ENCODE measurements at regions of chrX and their contacts with region 1.

Region 1: DNA sequence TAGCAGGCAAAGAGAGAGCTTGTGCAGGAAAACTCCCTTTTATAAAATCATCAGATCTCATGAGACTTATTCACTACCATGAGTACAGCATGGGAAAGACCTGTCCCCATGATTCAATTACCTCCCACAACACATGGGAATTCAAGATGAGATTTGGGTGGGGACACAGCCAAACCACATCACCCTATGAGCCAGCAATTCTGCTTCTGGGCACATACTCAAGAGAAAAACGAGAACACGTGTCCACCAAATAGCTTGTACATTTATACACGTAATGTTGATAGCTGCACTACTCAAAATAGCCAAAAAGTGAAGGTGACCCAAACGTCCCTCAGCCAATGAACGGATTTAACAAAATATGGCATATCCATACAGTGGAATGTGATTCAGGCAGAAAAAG is 94.5 kb upstream of the DHRSX start:
- DNase-seq: no peak
- H3K4me3 Mint-ChIP-seq: no peak overlapping the region
- H3K27ac Mint-ChIP-seq: no peak overlapping the region
- H3K4me1 Mint-ChIP-seq: peaks cover 18% of the 10 kb centered on the region
- H3K27me3 Mint-ChIP-seq: no peaks in the 10 kb centered on the region

Region 2: DNA sequence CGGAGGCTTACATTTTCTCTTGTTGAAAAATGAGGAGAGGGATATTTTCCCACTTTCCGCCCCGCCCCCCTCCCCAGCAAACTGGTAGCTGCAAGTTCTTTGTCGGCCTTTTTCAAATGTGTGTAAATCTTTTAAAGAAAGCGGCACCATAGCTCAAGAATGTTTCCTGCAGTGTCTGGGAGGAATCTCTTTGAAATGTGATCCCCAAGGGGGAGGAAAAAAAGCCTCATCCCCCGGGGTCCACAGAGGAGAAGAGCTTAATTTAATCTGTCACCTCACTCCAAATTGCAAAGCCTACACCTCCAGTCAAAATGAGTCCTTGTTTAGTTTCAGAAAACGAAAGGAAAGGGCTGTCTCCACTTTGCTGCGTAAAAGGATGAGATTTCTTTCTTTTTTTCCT is 945.6 kb before region 1 on chrX:
- intact Hi-C with region 1: loop called (anchors 1 kb)
- DNase-seq: no peak
- H3K4me3 Mint-ChIP-seq: no peak overlapping the region
- H3K27ac Mint-ChIP-seq: no peak overlapping the region
- H3K4me1 Mint-ChIP-seq: peaks cover 10% of the 10 kb centered on the region
- H3K27me3 Mint-ChIP-seq: peaks cover 4% of the 10 kb centered on the region

Region 3: GRCh38 chrX:2984344-2984743 is 389.1 kb after region 1 on chrX:
- intact Hi-C with region 1: no loop called
- DNase-seq: no peak
- H3K4me3 Mint-ChIP-seq: no peak overlapping the region
- H3K27ac Mint-ChIP-seq: no peak overlapping the region
- H3K4me1 Mint-ChIP-seq: no peaks in the 10 kb centered on the region
- H3K27me3 Mint-ChIP-seq: no peaks in the 10 kb centered on the region

Measured in activated T-helper 1 cell treated with anti-CD3 and anti-CD28 coated beads, Interleukin-12 subunit alpha, Interleukin-12 subunit beta, Interleukin-2, Interleukin-4 antibody, amounts not matched to agents 30 ng/mL and 10 ng/mL and 1 ng/mL, durations not matched to agents 14 hours and 24 hours and 36 hours (primary cell).